GM10248 (cell line): ENCODE measurements at regions of chr1 and their contacts with region 1.

Region 1: DNA sequence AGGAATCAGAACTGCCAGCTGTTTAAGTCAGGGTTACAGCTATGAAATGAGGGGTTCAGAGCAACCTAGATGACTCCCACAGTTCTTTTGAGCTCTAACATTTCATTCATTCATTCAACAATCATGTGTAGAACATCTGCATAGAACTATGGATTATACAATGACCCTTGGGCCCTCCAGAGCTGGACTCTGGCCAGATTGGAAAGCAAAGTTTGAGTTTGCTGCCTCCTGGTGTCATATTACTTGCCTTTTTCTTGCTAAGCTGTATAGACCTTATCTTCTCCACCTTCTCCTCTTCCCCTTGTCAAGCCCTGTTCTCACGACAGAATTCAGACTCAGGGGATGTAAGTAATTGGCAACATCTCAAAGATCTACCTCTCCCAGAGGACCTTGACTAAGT is 4.0 kb downstream of the CASQ2 start:
- DNase-seq: no peak
- CTCF ChIP-seq: peak; percentile 29

Region 2: DNA sequence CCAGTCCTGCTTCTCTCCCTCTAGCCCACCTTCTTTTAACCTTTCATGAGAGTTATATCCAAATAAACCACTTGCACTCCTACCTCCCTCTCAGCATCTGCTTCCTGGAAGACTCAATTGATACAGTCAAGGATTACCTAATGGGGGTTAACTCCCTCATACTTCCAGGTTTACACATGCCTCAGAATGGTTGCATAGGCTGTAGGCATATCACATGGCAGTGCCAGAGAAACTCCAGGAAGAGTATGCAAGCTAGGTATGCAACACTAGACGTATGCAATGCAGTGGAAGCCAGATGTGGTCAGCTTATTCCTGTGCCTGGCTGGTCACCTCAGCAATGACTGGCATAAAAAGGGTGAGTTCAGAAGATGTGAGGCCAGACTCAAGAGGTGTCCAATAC is 155.5 kb before region 1 on chr1:
- CTCF ChIA-PET with region 1: interaction called, 27 read pairs
- POLR2A ChIA-PET with region 1: no interaction called
- DNase-seq: no peak
- CTCF ChIP-seq: no peak

Region 3: GRCh38 chr1:115717541-115717940 is 47.0 kb before region 1 on chr1:
- CTCF ChIA-PET with region 1: interaction called, 62 read pairs
- POLR2A ChIA-PET with region 1: no interaction called
- DNase-seq: peak; percentile 29
- CTCF ChIP-seq: peak; percentile 47

Region 4: DNA sequence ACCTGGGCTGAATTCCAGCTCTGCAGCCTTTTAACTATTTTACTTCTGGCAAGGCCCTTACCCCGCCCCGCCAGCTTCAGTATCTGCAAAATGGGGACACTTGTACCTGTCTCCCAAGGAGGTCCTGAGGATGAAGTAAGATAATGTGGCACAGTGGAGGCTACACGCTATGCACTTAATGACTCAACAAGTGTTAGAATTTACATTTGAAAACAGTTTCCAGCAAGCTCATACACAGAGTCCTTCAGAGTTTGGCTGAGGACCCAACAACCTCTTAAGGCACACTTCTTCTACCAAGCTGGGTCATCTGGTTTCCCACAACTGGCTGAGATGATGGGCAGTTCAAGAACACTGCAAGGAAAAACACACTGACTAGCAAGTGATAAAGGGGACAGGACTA is 181.6 kb after region 1 on chr1:
- CTCF ChIA-PET with region 1: no interaction called
- POLR2A ChIA-PET with region 1: no interaction called
- DNase-seq: no peak
- CTCF ChIP-seq: no peak